Activated CD8-positive, alpha-beta T cell treated with anti-CD3 and anti-CD28 coated beads for 36 hours (primary cell): ENCODE measurements at regions of chr1 and their contacts with region 1.

Region 1: DNA sequence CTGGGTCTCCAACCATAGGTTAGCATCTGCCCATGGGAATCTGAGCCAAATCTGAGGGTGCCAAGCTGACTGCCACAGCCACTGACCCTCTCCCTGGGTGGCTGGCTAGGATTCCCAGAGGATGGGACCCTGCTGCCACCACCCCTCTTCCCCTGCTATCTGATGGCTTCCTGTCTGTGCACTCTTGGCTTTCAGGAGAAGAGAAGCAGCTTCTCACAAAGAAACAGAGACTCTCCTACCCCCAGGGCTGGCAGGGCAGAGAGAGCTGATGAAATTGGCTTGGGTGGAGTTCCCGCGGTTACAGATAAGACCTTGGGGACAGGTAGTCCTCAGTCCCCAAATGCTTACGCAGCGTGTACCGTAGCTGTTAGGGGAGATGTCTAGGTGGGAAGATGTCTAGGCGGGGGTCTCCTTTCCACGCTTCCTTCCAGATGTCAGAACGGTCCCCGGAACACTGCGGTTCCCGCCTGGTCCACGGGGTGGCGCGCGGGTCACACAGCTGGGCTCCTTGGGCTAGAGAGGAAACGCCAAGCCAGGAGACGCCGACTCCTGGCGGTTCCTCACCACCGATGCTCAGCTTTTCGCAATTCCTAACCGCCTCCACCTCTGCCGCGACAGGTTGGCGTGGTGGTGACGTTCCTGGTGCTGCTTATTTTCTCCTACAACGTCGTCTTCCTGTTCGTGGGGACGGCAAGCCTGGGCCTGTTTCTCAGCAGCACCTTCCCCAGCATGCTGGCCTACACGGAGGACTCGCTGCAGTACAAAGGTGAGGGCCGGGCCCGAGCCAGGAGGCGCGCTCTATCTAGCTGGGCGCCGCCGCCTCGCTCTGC is 40.1 kb downstream of the ELK4 start:
- DNase-seq: peak; percentile 95
- ATAC-seq: peak; percentile 93
- H3K4me3 Mint-ChIP-seq: peak overlapping the region; percentile 84
- H3K27ac Mint-ChIP-seq: peak overlapping the region; percentile 93
- H3K4me1 Mint-ChIP-seq: peaks cover 38% of the 10 kb centered on the region
- H3K27me3 Mint-ChIP-seq: no peaks in the 10 kb centered on the region
- CTCF ChIP-seq: peak; percentile 96

Region 2: GRCh38 chr1:205528887-205529825 is 62.6 kb before region 1 on chr1:
- CTCF ChIA-PET with region 1: interaction called, 68 read pairs
- POLR2A ChIA-PET with region 1: no interaction called
- intact Hi-C with region 1: no loop called
- DNase-seq: peak; percentile 90
- ATAC-seq: peak; percentile 92
- H3K4me3 Mint-ChIP-seq: peak overlapping the region; percentile 57
- H3K27ac Mint-ChIP-seq: no peak overlapping the region
- H3K4me1 Mint-ChIP-seq: peaks cover 5% of the 10 kb centered on the region
- H3K27me3 Mint-ChIP-seq: no peaks in the 10 kb centered on the region
- CTCF ChIP-seq: peak; percentile 98

Region 3: GRCh38 chr1:205610036-205610435 is 18.3 kb after region 1 on chr1:
- CTCF ChIA-PET with region 1: interaction called, 16 read pairs
- POLR2A ChIA-PET with region 1: interaction called, 6 read pairs
- intact Hi-C with region 1: no loop called
- DNase-seq: no peak
- ATAC-seq: no peak
- H3K4me3 Mint-ChIP-seq: no peak overlapping the region
- H3K27ac Mint-ChIP-seq: peak overlapping the region; percentile 25
- H3K4me1 Mint-ChIP-seq: peaks cover 54% of the 10 kb centered on the region
- H3K27me3 Mint-ChIP-seq: no peaks in the 10 kb centered on the region
- CTCF ChIP-seq: no peak

Region 4: DNA sequence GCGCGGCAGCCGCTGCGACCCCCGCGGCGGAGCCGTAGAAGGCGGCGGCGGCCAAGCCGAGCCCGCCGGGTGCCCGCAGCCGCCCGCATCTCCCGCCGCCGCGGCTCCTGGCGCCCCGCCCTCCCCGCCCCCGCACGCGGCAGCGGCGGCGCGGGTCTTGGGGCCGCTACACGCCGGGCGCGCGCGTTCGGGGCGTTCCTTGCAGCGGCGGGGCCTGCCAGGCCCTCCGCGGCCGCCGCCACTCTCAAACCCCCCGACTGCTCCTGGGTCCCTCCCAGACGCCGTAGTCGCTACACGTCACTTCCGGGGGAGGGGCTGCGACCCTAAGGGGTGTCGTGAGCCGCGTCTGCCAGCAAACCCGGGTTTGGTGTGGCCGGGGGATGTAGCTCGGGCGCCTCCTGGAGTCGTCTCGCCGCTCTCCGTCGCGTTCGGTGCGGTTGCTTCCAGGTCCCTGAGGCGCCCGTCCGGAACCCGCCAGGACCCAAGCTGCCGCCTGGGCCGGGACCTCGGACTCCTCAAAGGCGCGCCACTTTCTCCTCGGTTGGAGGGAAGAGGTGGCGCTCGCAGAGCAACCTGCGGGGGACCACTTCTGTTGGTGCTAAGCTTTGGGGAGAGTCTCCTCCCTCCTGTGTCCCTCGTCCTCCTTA is 40.1 kb after region 1 on chr1 and contains the start of gene ELK4:
- CTCF ChIA-PET with region 1: interaction called, 306 read pairs
- POLR2A ChIA-PET with region 1: interaction called, 119 read pairs
- intact Hi-C with region 1: loop called (anchors 1 kb)
- DNase-seq: peak; percentile 99
- ATAC-seq: peak; percentile 85
- H3K4me3 Mint-ChIP-seq: peak within 1 kb of the TSS; percentile 93
- H3K27ac Mint-ChIP-seq: peak within 1 kb of the TSS; percentile 96
- H3K4me1 Mint-ChIP-seq: peaks cover 34% of the 10 kb centered on the region
- H3K27me3 Mint-ChIP-seq: no peaks in the 10 kb centered on the region
- CTCF ChIP-seq: peak; percentile 67
- total RNA-seq, gene ELK4: 61.5 to 62.1 TPM

Region 5: GRCh38 chr1:205680073-205680851 is 88.5 kb after region 1 on chr1 and contains the start of gene SLC45A3:
- CTCF ChIA-PET with region 1: interaction called, 10 read pairs
- POLR2A ChIA-PET with region 1: no interaction called
- intact Hi-C with region 1: no loop called
- DNase-seq: peak; percentile 48
- ATAC-seq: peak; percentile 79
- H3K4me3 Mint-ChIP-seq: peak within 1 kb of the TSS; percentile 72
- H3K27ac Mint-ChIP-seq: no peak within 1 kb of the TSS
- H3K4me1 Mint-ChIP-seq: peaks cover 12% of the 10 kb centered on the region
- H3K27me3 Mint-ChIP-seq: peaks cover 11% of the 10 kb centered on the region
- CTCF ChIP-seq: no peak
- total RNA-seq, gene SLC45A3: 0.38 to 0.65 TPM

Region 6: DNA sequence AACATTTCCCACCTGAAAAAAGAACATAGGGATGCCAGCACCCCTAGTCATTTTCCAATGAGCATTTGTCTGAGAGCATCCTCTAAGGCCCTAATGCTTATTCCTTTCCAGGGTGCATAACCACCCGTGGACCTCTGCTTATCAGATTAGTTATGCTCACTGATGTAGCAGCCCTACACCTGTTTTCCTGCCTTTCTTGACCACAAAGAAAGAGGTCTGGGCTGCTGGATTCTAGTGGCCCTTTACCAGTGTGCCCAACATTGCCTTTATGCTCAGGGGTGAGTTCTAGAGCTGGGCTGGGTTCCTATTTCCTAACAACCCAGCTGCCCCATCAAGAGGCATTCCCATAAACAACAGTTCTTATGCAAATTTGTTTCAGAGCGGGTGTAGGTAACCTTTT is 278.5 kb after region 1 on chr1:
- CTCF ChIA-PET with region 1: no interaction called
- POLR2A ChIA-PET with region 1: no interaction called
- intact Hi-C with region 1: no loop called
- DNase-seq: no peak
- ATAC-seq: no peak
- H3K4me3 Mint-ChIP-seq: no peak overlapping the region
- H3K27ac Mint-ChIP-seq: no peak overlapping the region
- H3K4me1 Mint-ChIP-seq: no peaks in the 10 kb centered on the region
- H3K27me3 Mint-ChIP-seq: no peaks in the 10 kb centered on the region
- CTCF ChIP-seq: no peak